ENCODE measurements at regions of chr3 and their contacts with region 1.

Region 1: DNA sequence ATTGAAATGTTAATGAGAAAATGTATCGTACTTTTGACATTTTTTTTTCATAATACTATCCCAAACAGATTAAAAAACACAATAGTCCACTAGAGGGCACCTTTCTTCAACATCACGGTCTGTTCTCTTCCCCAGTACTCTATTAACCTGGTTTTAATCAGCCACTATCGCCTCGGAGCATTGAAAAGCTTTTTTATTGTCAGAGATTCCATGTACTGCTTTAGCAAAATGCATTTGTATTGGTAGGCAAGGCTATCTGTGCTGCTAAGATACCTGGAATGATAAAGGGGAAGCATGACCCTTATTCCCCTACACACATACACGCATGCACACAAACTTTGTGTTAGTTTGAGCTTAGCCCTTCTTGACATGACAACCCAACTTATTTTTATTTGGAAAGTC is 160.1 kb upstream of the IL12A start:
- DNase-seq: peak; percentile 68
- ATAC-seq: peak; percentile 70
- H3K4me3 ChIP-seq: no peak overlapping the region
- H3K27ac ChIP-seq: 0 out of 2 replicates have a peak overlapping the region, but pooled peaks have one; percentile 65
- H3K4me1 ChIP-seq: peaks cover 15% of the 10 kb centered on the region
- H3K27me3 ChIP-seq: no peaks in the 10 kb centered on the region
- CTCF ChIP-seq: peak; percentile 60
- POLR2A ChIP-seq: no peak
- RAD21 ChIP-seq: peak; percentile 69

Region 2: DNA sequence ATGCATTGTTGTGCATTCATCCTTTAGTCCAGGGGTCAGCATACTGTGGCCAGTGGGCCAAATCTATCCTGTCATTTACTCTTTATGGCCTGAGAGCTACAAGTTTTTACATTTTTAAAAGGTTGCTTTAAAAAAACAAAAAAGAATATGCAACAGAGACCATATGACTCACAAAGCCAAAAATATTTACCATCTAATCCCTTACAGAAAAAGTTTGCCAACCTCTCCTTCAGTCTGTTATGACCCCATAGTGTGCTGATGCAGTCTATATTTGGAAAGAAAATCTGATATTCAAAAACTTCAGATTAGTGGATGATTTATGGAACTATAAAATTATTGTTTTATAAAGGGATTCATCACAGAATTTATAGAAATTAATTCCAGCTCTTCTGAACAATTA is 77.4 kb before region 1 on chr3:
- CTCF ChIA-PET with region 1: no interaction called
- POLR2A ChIA-PET with region 1: no interaction called
- dilution Hi-C with region 1: no loop called
- in situ Hi-C with region 1: no loop called
- intact Hi-C with region 1: no loop called
- DNase-seq: peak; percentile 52
- ATAC-seq: peak; percentile 71
- H3K4me3 ChIP-seq: no peak overlapping the region
- H3K27ac ChIP-seq: no peak overlapping the region
- H3K4me1 ChIP-seq: peaks cover 5% of the 10 kb centered on the region
- H3K27me3 ChIP-seq: no peaks in the 10 kb centered on the region
- CTCF ChIP-seq: no peak
- POLR2A ChIP-seq: no peak
- RAD21 ChIP-seq: no peak

Region 3: GRCh38 chr3:159852821-159853505 is 24.4 kb after region 1 on chr3:
- CTCF ChIA-PET with region 1: interaction called, 11 read pairs
- POLR2A ChIA-PET with region 1: interaction called, 5 read pairs
- dilution Hi-C with region 1: no loop called
- in situ Hi-C with region 1: no loop called
- intact Hi-C with region 1: no loop called
- DNase-seq: peak; percentile 56
- ATAC-seq: peak; percentile 19
- H3K4me3 ChIP-seq: peak overlapping the region; percentile 21; the same call in 1 of the 2 replicates
- H3K27ac ChIP-seq: peak overlapping the region; percentile 68
- H3K4me1 ChIP-seq: peaks cover 19% of the 10 kb centered on the region
- H3K27me3 ChIP-seq: no peaks in the 10 kb centered on the region
- CTCF ChIP-seq: no peak
- POLR2A ChIP-seq: 0 out of 2 replicates have a peak, but pooled peaks have one; percentile 25
- RAD21 ChIP-seq: no peak

Region 4: GRCh38 chr3:159877924-159878323 is 49.4 kb after region 1 on chr3:
- CTCF ChIA-PET with region 1: interaction called, 37 read pairs
- POLR2A ChIA-PET with region 1: no interaction called
- dilution Hi-C with region 1: no loop called
- in situ Hi-C with region 1: loop called (anchors 5 kb)
- intact Hi-C with region 1: loop called (anchors 1 kb)
- DNase-seq: peak; percentile 82
- ATAC-seq: no peak
- H3K4me3 ChIP-seq: no peak overlapping the region
- H3K27ac ChIP-seq: no peak overlapping the region
- H3K4me1 ChIP-seq: peaks cover 17% of the 10 kb centered on the region
- H3K27me3 ChIP-seq: no peaks in the 10 kb centered on the region
- CTCF ChIP-seq: no peak
- POLR2A ChIP-seq: no peak
- RAD21 ChIP-seq: no peak

Region 5: GRCh38 chr3:159929435-159930141 is 101.0 kb after region 1 on chr3:
- CTCF ChIA-PET with region 1: interaction called, 6 read pairs
- POLR2A ChIA-PET with region 1: no interaction called
- dilution Hi-C with region 1: no loop called
- in situ Hi-C with region 1: no loop called
- intact Hi-C with region 1: loop called (anchors 2 kb)
- DNase-seq: peak; percentile 87
- ATAC-seq: peak; percentile 41
- H3K4me3 ChIP-seq: no peak overlapping the region
- H3K27ac ChIP-seq: peak overlapping the region; percentile 93
- H3K4me1 ChIP-seq: peaks cover 24% of the 10 kb centered on the region
- H3K27me3 ChIP-seq: no peaks in the 10 kb centered on the region
- CTCF ChIP-seq: peak; percentile 67
- POLR2A ChIP-seq: no peak
- RAD21 ChIP-seq: peak; percentile 72

Region 6: GRCh38 chr3:160343132-160343531 is 514.6 kb after region 1 on chr3:
- CTCF ChIA-PET with region 1: no interaction called
- POLR2A ChIA-PET with region 1: no interaction called
- dilution Hi-C with region 1: no loop called
- in situ Hi-C with region 1: no loop called
- intact Hi-C with region 1: loop called (anchors 5 kb)
- DNase-seq: peak; percentile 49
- ATAC-seq: peak; percentile 40
- H3K4me3 ChIP-seq: no peak overlapping the region
- H3K27ac ChIP-seq: no peak overlapping the region
- H3K4me1 ChIP-seq: peaks cover 2% of the 10 kb centered on the region; the same call in 1 of the 2 replicates
- H3K27me3 ChIP-seq: no peaks in the 10 kb centered on the region
- CTCF ChIP-seq: peak; percentile 71
- POLR2A ChIP-seq: no peak
- RAD21 ChIP-seq: peak; percentile 74